ENCODE measurements at regions of chr20 and their contacts with region 1.

Region 1: DNA sequence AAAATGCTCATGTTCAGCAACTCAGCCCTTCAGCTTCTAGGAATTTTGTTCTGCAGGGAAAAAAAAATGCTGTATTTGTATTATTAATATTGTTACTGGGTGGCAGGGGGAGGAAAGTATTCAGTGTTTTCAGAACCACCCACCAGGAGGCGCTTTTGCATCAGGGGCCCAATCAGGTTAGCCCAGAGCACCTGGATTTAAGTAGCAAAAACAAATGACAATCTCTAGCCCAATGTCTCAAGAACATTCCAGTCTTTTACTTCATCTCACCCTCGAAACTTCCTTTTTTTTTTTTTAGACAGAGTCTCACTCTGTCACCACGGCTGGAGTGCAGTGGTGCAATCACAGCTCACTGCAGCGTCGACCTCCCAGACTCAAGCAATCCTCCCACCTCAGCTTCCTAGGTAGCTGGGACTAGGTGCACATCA is 635 bp upstream of the C20orf203 start:
- DNase-seq: peak; percentile 44
- H3K4me3 ChIP-seq: no peak overlapping the region
- H3K27ac ChIP-seq: no peak overlapping the region
- H3K4me1 ChIP-seq: peaks cover 5% of the 10 kb centered on the region
- H3K27me3 ChIP-seq: no peaks in the 10 kb centered on the region
- CTCF ChIP-seq: peak; percentile 88 to 93

Region 2: GRCh38 chr20:32762149-32762753 is 87.9 kb after region 1 on chr20 and contains the start of gene DNMT3B:
- CTCF ChIA-PET with region 1: no interaction called
- dilution Hi-C with region 1: no loop called
- in situ Hi-C with region 1: no loop called
- intact Hi-C with region 1: no loop called
- DNase-seq: peak; percentile 49
- H3K4me3 ChIP-seq: peak within 1 kb of the TSS; percentile 50 to 64 (median 61)
- H3K27ac ChIP-seq: no peak within 1 kb of the TSS
- H3K4me1 ChIP-seq: peaks cover 10% of the 10 kb centered on the region
- H3K27me3 ChIP-seq: peaks cover 3% of the 10 kb centered on the region
- CTCF ChIP-seq: peak in 1 of 2 donors; percentile 9
- total RNA-seq, gene DNMT3B: 1.2 to 2.0 TPM

Region 3: GRCh38 chr20:32945710-32946221 is 271.4 kb after region 1 on chr20:
- CTCF ChIA-PET with region 1: no interaction called
- dilution Hi-C with region 1: no loop called
- in situ Hi-C with region 1: no loop called
- intact Hi-C with region 1: loop called (anchors 1 kb)
- DNase-seq: peak; percentile 4
- H3K4me3 ChIP-seq: no peak overlapping the region
- H3K27ac ChIP-seq: no peak overlapping the region
- H3K4me1 ChIP-seq: no peaks in the 10 kb centered on the region
- H3K27me3 ChIP-seq: no peaks in the 10 kb centered on the region
- CTCF ChIP-seq: peak; percentile 43 to 73

Region 4: DNA sequence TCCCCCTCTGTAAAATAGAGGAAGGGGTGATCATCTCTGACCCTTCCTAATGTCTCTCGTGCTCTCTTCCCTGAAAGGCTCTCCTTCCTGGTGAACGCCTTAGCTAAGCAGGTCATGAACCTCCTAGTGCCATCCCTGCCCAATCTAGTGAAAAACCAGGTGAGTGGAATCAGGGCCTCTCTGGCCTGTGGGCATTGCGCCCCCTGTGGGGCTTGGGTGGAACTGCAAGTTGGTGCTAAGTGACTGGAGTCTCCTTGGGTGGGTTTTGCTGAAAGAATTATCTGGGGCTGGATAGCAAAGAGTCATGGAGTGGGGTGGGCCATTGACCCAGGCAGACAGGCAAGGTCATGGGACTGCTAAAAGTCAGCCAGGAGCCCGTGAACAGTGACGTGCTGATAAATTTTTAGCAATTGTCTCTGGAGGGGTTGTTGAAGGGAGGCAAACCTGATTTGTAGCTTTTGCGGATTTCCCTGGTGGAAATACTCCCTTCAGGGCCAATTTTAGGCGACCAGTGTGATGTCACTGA is 617.5 kb after region 1 on chr20:
- CTCF ChIA-PET with region 1: interaction called, 5 read pairs
- dilution Hi-C with region 1: no loop called
- in situ Hi-C with region 1: no loop called
- intact Hi-C with region 1: loop called (anchors 5 kb)
- DNase-seq: peak; percentile 17
- H3K4me3 ChIP-seq: no peak overlapping the region
- H3K27ac ChIP-seq: no peak overlapping the region
- H3K4me1 ChIP-seq: no peaks in the 10 kb centered on the region
- H3K27me3 ChIP-seq: no peaks in the 10 kb centered on the region
- CTCF ChIP-seq: peak; percentile 94 to 99

Measured in mammary epithelial cell (primary cell).